K562 (cell line): ENCODE measurements at regions of chr1 and their contacts with region 1.

Region 1: DNA sequence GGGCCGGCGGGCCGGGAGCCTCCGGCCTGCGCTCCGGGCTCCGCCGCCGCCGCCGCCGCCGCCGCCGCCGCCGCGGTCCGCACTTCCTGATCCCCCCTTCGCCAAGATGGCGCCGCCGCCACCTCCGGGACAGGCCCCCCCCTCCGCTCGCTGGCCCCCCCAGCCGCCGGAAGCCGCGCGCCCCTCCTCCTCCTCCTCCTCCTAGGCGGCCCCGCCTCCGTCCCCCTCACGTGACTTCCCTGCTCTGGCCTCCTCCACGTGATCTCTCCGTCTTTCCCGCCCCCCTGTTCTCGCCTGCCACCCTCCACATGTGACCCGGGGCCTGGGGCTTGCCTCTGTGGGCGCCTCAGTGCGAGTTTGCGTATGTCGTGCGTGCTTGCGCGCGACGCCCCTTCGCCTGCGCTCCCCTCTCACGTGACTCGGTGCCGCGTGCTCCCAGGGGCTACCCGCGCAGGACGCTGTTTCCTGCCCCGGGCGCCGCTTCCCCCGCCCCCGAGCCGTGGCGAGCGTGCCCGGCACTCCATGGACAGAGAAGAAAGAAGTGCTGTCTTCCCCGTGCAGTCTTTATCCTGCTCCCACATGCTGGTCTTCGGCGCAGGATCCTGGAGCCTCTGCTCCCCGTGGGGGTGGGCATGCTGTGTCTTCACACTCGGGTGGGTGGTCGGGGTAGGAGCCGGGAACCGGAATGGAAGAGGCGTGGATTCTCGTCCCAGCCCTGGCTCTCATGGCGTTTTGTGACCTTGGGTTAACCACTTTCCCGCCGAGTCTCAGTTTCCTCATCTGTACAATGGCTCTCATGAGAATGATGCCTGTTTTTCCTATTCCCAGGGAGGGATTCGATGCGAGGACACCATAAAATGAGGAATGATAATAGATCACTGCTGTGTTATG is at the start of gene UBE2Q1:
- DNase-seq: peak; percentile 94 to 98 (median 96)
- ATAC-seq: peak; percentile 94
- H3K4me3 ChIP-seq: peak within 1 kb of the TSS; percentile 82
- H3K27ac ChIP-seq: peak within 1 kb of the TSS; percentile 82
- H3K4me1 ChIP-seq: peaks cover 18 to 21% of the 10 kb centered on the region in 2 experiments; a peak in 4 of 5 replicates
- H3K27me3 ChIP-seq: peaks cover 2 to 9% of the 10 kb centered on the region in 2 experiments; a peak in 1 of 5 replicates
- CTCF ChIP-seq: 0 out of 6 replicates have a peak, but pooled peaks of 1 of the 3 experiments have one; percentile 6
- EP300 ChIP-seq: no peak
- POLR2A ChIP-seq: peak; percentile 80
- RAD21 ChIP-seq: no peak
- polyA plus RNA-seq, gene UBE2Q1: 8.0 to 10.6 TPM

Region 2: GRCh38 chr1:154485106-154485505 is 73.7 kb before region 1 on chr1:
- CTCF ChIA-PET with region 1: interaction called, 4 read pairs
- POLR2A ChIA-PET with region 1: no interaction called
- in situ Hi-C with region 1: loop called (anchors 5 kb)
- intact Hi-C with region 1: no loop called
- DNase-seq: no peak
- ATAC-seq: no peak
- H3K4me3 ChIP-seq: no peak overlapping the region
- H3K27ac ChIP-seq: no peak overlapping the region
- H3K4me1 ChIP-seq: peaks cover 6 to 14% of the 10 kb centered on the region in 2 experiments; a peak in 4 of 5 replicates
- H3K27me3 ChIP-seq: peaks cover 3 to 7% of the 10 kb centered on the region in 2 experiments; a peak in 1 of 5 replicates
- CTCF ChIP-seq: no peak
- EP300 ChIP-seq: no peak
- POLR2A ChIP-seq: no peak
- RAD21 ChIP-seq: no peak

Region 3: GRCh38 chr1:154760469-154760933 is 201.7 kb after region 1 on chr1:
- CTCF ChIA-PET with region 1: interaction called, 3 read pairs
- POLR2A ChIA-PET with region 1: interaction called, 3 read pairs
- in situ Hi-C with region 1: no loop called
- intact Hi-C with region 1: loop called (anchors 5 kb)
- DNase-seq: peak; percentile 72 to 83 (median 82)
- ATAC-seq: peak; percentile 99
- H3K4me3 ChIP-seq: peak overlapping the region; percentile 35
- H3K27ac ChIP-seq: no peak overlapping the region
- H3K4me1 ChIP-seq: peaks cover 0 to 8% of the 10 kb centered on the region in 2 experiments; a peak in 2 of 5 replicates
- H3K27me3 ChIP-seq: peaks cover 10 to 38% of the 10 kb centered on the region in 2 experiments; a peak in 4 of 5 replicates
- CTCF ChIP-seq: peak; percentile 59 to 81 (median 74)
- EP300 ChIP-seq: no peak
- POLR2A ChIP-seq: no peak
- RAD21 ChIP-seq: peak; percentile 37 to 71

Region 4: GRCh38 chr1:154936555-154937084 is 377.8 kb after region 1 on chr1 and contains the start of gene PMVK:
- CTCF ChIA-PET with region 1: no interaction called
- POLR2A ChIA-PET with region 1: no interaction called
- in situ Hi-C with region 1: no loop called
- intact Hi-C with region 1: loop called (anchors 2 kb)
- DNase-seq: peak; percentile 97 to 98 (median 97)
- ATAC-seq: peak; percentile 95
- H3K4me3 ChIP-seq: peak within 1 kb of the TSS; percentile 53
- H3K27ac ChIP-seq: peak within 1 kb of the TSS; percentile 100
- H3K4me1 ChIP-seq: peaks cover 18 to 37% of the 10 kb centered on the region in 2 experiments; a peak in 4 of 5 replicates
- H3K27me3 ChIP-seq: no peaks in the 10 kb centered on the region
- CTCF ChIP-seq: peak; percentile 58 to 75 (median 74)
- EP300 ChIP-seq: no peak; the same call in none of the 2 replicates
- POLR2A ChIP-seq: peak; percentile 81
- RAD21 ChIP-seq: peak; percentile 52 to 75
- polyA plus RNA-seq, gene PMVK: 1.1 to 3.8 TPM

Region 5: GRCh38 chr1:155063550-155064110 is 504.8 kb after region 1 on chr1 and contains the start of gene EFNA4:
- CTCF ChIA-PET with region 1: interaction called, 12 read pairs
- POLR2A ChIA-PET with region 1: no interaction called
- in situ Hi-C with region 1: no loop called
- intact Hi-C with region 1: loop called (anchors 2 kb)
- DNase-seq: peak; percentile 91 to 93 (median 92)
- ATAC-seq: peak; percentile 91
- H3K4me3 ChIP-seq: peak within 1 kb of the TSS; percentile 58
- H3K27ac ChIP-seq: peak within 1 kb of the TSS; percentile 45; the same call in 2 of the 3 replicates
- H3K4me1 ChIP-seq: peaks cover 27 to 58% of the 10 kb centered on the region in 2 experiments
- H3K27me3 ChIP-seq: no peaks in the 10 kb centered on the region
- CTCF ChIP-seq: no peak
- EP300 ChIP-seq: no peak
- POLR2A ChIP-seq: peak; percentile 71
- RAD21 ChIP-seq: no peak
- polyA plus RNA-seq, gene EFNA4: 0.68 to 0.89 TPM